Mammary epithelial cell (primary cell): ENCODE measurements at regions of chr14 and their contacts with region 1.

Region 1: DNA sequence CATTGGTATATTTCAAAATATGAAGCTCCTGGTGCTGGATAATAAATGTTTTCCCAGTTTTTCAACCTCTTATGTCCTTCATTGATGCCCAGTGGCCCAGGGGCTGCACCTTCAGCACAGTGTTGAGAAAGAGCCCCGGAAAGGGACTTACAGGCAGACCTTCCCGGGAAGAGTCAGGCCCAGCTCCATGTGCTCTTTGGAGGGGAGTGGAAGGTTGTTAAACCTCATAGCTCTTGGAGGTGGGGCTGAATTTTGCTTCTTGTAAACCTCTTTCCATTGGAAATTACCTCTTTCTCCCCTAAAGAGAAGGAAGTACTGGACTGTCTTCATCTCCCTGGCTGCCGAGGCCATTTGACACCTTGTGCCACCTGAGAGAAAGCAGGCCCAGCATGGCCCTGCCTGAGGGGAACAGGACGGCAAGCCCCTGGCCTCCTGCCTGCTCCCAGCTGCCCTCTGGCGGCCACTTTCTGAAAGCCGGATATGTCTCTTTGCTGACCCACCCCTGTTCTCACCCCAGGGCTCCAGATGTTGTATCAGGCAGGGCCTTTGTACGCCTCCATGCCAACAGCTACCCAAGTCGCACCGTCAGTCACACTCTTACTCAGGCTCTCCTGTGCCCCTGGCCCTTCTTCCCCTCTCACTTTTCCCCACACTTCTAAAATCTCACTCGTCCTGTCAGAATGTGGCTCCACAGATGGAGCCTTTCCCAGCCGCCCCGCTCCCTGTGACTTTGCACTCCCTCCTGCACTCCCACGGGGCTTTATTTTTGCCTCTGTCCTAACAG is 43.0 kb downstream of the EVL start:
- DNase-seq: peak; percentile 58
- H3K4me3 ChIP-seq: no peak overlapping the region
- H3K27ac ChIP-seq: peak overlapping the region; percentile 55
- H3K4me1 ChIP-seq: peaks cover 27% of the 10 kb centered on the region
- H3K27me3 ChIP-seq: no peaks in the 10 kb centered on the region
- CTCF ChIP-seq: peak; percentile 75 to 96

Region 2: GRCh38 chr14:99982537-99983250 is 125.5 kb before region 1 on chr14:
- CTCF ChIA-PET with region 1: no interaction called
- dilution Hi-C with region 1: loop called (anchors 5 kb)
- in situ Hi-C with region 1: loop called in 1 of 2 experiments (anchors 10 kb)
- intact Hi-C with region 1: loop called (anchors 1 kb)
- DNase-seq: peak; percentile 42
- H3K4me3 ChIP-seq: no peak overlapping the region
- H3K27ac ChIP-seq: no peak overlapping the region
- H3K4me1 ChIP-seq: peaks cover 3% of the 10 kb centered on the region
- H3K27me3 ChIP-seq: no peaks in the 10 kb centered on the region
- CTCF ChIP-seq: peak; percentile 83 to 92

Region 3: DNA sequence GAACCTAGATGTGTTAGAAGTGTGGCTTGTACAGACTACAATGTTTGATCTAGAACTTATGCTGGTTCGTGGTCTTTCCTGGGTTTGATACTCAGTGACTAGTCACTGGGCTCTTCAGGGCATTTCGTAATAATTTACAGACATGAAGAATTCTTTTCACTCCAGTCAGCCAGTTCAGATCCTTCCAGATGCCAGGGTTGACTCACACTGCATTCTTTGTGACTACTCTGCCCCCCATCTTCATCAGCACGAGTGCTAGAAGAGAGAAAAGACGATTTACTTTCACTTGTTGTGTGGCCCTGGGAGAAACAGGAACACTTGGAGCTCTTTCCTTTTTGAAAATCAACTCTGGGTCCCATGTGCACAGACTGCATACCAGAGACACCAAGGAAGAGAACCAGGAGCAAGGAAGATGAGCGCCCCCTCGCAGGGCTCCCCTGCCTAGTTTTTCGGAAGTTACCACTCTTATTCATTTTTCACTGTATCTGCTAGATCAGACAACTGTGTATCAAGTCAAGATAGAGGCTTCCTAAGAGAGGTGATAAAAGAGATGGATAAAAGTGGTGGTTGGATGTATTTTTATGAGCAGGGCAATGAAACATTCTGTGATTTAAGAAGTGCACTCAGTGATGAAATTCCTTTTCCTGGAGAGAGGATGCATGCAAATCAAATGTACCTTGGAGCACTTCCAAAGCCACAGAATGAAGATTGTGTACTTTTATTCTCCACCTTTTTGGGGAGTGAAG is 76.5 kb before region 1 on chr14:
- CTCF ChIA-PET with region 1: no interaction called
- dilution Hi-C with region 1: no loop called
- in situ Hi-C with region 1: no loop called
- intact Hi-C with region 1: loop called (anchors 1 kb)
- DNase-seq: peak; percentile 97
- H3K4me3 ChIP-seq: peak overlapping the region; percentile 51 to 61 (median 55)
- H3K27ac ChIP-seq: peak overlapping the region; percentile 88
- H3K4me1 ChIP-seq: peaks cover 38% of the 10 kb centered on the region
- H3K27me3 ChIP-seq: no peaks in the 10 kb centered on the region
- CTCF ChIP-seq: peak; percentile 7 to 9

Region 4: GRCh38 chr14:100076133-100076532 is 32.1 kb before region 1 on chr14:
- CTCF ChIA-PET with region 1: interaction called, 8 read pairs
- dilution Hi-C with region 1: no loop called
- in situ Hi-C with region 1: loop called in 1 of 2 experiments (anchors 5 kb)
- intact Hi-C with region 1: loop called (anchors 1 kb)
- DNase-seq: peak; percentile 56
- H3K4me3 ChIP-seq: no peak overlapping the region
- H3K27ac ChIP-seq: no peak overlapping the region
- H3K4me1 ChIP-seq: peaks cover 28% of the 10 kb centered on the region
- H3K27me3 ChIP-seq: no peaks in the 10 kb centered on the region
- CTCF ChIP-seq: peak; percentile 42 to 43

Region 5: GRCh38 chr14:100096570-100096971 is 11.7 kb before region 1 on chr14:
- CTCF ChIA-PET with region 1: no interaction called
- dilution Hi-C with region 1: no loop called
- in situ Hi-C with region 1: no loop called
- intact Hi-C with region 1: loop called (anchors 1 kb)
- DNase-seq: peak; percentile 80
- H3K4me3 ChIP-seq: no peak overlapping the region
- H3K27ac ChIP-seq: no peak overlapping the region
- H3K4me1 ChIP-seq: peaks cover 16% of the 10 kb centered on the region
- H3K27me3 ChIP-seq: no peaks in the 10 kb centered on the region
- CTCF ChIP-seq: no peak

Region 6: DNA sequence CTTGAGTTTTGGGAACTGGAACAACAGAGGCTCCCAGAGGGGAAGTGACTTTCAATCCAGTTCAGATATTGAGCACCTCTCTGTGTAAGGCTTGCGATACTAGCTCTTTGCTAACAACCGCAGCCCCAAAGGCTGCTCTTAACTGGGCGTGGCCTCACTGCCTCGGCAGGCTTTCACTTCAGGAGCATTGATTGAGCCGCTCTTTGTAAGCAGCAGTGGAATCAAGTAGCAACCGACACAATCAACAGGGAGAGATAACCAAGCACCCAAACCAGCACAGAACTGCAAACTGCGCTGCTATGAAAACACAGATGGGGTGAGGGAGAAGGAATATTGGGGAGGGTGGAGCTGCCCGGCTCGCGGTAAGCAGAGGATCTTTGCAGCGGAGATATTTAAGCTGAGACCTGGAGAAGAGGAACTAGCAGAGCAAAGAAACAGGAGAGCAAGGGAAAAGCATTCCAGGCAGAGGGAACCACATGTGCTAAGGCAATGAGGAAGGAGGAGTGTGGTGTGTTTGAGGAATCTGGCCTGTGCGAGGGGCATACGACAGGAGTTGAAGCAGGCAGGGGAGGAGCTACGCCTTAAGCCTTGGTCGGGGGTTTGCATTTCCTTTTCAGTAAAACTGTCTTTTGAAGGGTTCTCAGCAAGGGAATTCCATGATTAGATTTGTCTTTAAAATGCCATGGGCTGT is 113.4 kb after region 1 on chr14:
- CTCF ChIA-PET with region 1: no interaction called
- dilution Hi-C with region 1: no loop called
- in situ Hi-C with region 1: no loop called
- intact Hi-C with region 1: no loop called
- DNase-seq: peak; percentile 61
- H3K4me3 ChIP-seq: peak overlapping the region; percentile 33 to 55 (median 52)
- H3K27ac ChIP-seq: peak overlapping the region; percentile 10
- H3K4me1 ChIP-seq: peaks cover 6% of the 10 kb centered on the region
- H3K27me3 ChIP-seq: no peaks in the 10 kb centered on the region
- CTCF ChIP-seq: no peak